HEK293T (cell line): ENCODE measurements at regions of chr16 and their contacts with region 1.

Region 1: DNA sequence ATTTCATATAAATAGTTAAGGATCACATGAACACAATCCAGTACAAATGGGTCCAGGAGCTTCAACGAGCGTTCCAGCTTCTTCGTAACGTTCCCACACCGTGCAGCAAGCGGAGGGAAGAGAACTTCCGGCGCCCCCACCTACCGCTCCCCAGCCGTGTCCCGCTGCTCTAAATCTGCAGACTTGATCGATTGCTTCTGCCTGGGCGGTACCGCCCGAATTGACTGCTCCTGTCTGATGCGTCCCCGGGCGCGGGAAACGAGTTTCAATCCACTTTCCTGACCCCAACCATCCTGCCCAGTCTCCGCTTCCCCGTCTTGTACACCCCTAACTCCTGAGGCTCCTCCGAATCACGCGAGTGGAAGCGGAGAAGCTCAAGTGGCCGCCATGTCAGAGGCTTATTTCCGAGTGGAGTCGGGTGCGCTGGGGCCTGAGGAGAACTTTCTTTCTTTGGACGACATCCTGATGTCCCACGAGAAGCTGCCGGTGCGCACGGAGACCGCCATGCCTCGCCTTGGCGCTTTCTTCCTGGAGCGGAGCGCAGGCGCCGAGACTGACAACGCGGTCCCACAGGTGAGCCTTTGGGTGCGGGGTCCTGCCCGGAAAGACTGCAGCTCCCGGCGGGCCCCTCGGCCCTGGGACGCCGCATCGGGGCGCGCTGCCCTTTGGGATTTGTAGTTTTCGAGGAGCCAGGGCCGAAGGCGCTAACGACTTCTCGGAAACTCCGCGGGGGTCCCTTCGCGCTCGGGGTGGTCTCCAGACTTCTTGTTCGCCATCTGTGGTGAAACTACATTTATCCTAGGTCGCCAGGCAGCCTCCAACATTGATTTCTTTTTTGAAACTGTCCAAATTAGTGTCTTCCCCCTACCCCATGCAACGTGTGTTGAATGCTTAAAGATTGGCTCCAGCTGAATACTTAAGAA is at the start of gene GINS3:
- DNase-seq: peak; percentile 89

Region 2: GRCh38 chr16:58366247-58367031 is 26.0 kb before region 1 on chr16:
- CTCF ChIA-PET with region 1: no interaction called
- POLR2A ChIA-PET with region 1: interaction called, 11 read pairs
- DNase-seq: no peak